PC-3 (cell line): ENCODE measurements at regions of chr21 and their contacts with region 1.

Region 1: DNA sequence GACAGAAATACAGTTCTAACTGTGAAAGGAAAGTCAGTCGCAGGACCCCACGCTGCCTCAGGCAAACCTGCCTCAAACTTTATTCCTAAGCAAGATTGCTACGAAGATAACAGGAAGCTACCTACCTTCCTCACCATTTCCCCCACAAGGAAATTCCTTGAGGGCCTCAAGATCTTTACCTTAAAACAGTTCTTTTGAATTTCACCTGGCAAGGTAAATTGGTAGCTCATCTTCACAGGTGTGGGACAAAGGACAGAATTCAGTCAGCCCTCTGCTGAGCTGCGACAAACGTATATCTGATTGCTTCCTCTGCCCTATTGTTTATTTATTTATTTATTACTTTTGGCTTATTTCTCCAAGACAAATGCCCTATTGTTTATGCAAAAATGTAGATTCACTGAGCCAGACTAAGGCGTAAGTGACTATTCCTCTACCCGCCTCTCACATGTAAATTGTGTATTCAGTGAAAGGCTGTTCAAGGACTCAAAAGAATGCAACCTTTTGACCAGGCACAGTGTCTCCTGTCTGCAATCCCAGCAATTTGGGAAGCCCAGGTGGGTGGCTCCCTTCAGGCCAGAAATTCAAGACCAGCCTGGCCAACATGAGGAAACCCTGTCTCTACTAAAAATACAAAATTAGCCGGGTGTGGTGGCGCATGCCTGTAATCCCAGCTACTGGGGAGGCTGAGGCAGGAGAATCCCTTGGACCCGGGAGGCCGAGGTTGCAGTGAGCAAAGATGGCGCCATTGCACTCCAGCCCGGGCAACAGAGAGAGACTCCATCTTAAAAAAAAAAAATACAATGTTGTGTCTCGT is 17.3 kb upstream of the PKNOX1 start:
- DNase-seq: no peak
- ATAC-seq: no peak
- H3K4me3 ChIP-seq: no peak overlapping the region
- H3K27ac ChIP-seq: no peak overlapping the region
- H3K4me1 ChIP-seq: peaks cover 27% of the 10 kb centered on the region
- H3K27me3 ChIP-seq: no peaks in the 10 kb centered on the region
- CTCF ChIP-seq: no peak

Region 2: DNA sequence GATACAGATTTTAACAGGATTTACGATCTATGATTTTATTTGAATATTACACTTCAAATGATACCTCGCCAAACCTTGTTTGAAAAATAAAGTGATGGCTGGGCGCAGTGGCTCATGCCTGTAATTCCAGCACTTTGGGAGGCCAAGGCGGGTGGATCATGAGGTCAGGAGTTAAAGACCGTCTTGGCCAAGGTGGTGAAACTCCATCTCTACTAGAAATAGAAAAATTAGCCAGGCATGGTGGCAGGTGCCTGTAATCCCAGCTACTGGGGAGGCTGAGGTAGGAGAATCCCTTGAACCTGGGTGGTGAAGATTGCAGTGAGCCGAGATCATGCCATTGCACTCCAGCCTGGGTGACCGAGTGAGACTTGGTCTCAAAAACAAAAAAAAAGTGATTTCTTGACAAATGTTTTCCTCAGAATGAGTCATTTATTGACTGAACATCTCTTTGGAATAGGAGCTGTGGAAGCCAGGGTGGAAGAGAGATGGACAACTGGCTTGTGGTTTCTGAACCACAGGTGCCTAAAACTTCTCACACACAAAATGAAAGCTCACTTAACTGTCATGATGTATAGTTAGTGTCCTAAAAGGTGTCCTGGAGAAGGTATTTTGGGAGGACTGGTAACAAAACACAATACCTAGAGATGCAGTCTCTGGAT is 29.2 kb after region 1 on chr21:
- CTCF ChIA-PET with region 1: no interaction called
- POLR2A ChIA-PET with region 1: interaction called, 12 read pairs
- intact Hi-C with region 1: no loop called
- DNase-seq: peak; percentile 65
- ATAC-seq: peak; percentile 81
- H3K4me3 ChIP-seq: no peak overlapping the region
- H3K27ac ChIP-seq: peak overlapping the region; percentile 21; the same call in 1 of the 2 replicates
- H3K4me1 ChIP-seq: peaks cover 18% of the 10 kb centered on the region
- H3K27me3 ChIP-seq: no peaks in the 10 kb centered on the region
- CTCF ChIP-seq: no peak